Caki2 (cell line): ENCODE measurements at regions of chr20 and their contacts with region 1.

Region 1: DNA sequence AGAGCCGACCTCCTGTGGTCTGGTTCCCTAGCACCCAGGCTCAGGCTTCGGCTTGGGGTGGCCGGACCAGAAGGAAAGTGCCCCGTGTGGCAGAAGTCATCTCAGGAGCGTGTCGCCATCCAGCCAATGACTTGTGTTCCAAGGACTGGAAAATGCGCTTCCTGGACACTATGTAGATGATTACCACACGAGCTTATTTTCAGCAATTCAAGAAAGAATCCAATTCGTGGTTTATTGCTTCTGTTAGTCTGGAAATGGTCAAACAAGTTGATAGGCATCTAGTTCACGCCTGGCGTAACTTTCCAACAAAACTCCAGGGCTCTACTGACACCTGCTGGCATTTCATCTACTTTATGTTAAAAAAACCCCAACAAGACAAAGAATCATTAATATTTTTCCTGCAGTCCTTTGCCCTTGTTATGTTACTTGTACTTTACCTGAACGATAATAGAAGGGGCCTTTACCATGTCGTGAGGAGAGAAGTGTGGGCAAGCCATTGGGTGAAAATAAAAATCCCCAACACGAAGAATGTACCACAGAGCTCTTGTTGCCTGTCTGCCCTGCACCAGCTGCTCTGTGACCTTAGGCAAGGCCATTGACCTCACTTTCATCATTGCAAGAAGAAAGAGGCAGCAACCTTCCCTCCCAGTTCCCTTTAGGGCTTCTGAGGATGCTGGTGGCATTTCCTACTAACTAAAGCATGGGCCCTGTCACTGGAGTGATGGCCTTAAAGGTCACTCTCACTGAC is 154.7 kb upstream of the LAMP5 start:
- DNase-seq: peak; percentile 59

Region 2: GRCh38 chr20:8756410-8756809 is 603.3 kb before region 1 on chr20:
- in situ Hi-C with region 1: loop called (anchors 25 kb)
- DNase-seq: peak; percentile 79

Region 3: DNA sequence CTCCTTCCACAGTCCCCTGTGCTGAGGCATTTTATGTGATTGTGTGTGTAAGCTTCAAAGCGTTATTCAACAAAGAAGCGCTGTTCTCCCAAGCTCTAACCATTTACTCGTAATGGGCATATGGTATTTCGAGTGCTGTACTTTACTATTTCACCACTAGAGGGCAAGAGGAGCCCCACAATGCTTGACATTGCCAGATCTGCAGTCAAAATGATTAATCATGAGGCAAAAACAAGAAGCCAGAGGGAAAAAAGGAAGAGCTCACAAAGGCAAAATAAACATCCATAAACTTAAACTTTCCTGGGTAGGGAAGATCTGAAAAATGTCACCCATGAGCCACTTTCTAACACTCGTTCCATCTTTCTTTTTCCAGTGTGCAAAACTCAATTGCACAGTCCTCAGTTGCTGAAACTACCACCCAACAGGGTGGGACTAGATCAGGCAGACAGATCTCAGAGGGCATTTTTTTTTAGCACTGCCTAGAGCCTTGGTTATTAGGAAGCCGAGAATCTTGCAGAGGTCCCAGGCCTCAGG is 505.9 kb before region 1 on chr20:
- in situ Hi-C with region 1: loop called (anchors 25 kb)
- DNase-seq: peak; percentile 78